OCI-LY7 (cell line): ENCODE measurements at regions of chr1 and their contacts with region 1.

Region 1: DNA sequence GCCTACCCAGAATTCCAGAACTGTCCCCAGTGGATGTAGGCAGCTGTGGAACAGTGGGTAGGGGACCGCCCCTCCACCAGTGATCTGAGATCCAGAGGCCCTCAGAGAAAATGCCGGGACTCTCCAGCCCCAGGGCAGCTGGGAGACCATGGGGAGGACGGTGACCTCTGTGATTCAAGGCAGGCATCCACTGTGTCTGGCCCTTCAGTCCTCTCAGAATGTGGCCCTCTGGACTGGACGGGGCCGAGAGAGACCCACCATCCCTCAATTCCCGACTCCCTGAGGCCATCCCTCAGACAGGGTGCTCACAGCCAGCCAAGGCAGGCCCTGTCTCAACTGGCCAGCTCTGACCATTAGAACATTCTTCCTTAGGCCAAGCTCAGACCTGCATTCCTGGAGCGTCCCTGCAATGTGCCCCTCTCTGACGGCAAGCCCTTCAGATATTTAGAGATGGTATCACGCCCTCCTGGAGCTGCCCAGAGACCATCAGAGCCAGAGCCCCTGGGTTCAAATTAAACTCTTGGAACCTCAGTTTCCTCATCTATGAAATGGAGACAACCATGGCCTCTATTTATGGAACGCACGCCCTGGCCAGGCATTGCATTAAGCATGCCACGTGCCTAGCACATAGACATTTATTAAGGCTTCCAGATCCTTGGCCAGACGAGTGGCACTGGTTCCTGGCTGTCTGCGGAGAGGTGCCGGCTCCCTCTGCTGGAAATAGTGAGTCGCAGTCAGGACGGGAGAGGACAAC is 9.6 kb upstream of the EPS8L3 start:
- DNase-seq: peak; percentile 80
- H3K4me3 ChIP-seq: no peak overlapping the region
- H3K27ac ChIP-seq: no peak overlapping the region
- H3K4me1 ChIP-seq: no peaks in the 10 kb centered on the region
- CTCF ChIP-seq: peak; percentile 83

Region 2: DNA sequence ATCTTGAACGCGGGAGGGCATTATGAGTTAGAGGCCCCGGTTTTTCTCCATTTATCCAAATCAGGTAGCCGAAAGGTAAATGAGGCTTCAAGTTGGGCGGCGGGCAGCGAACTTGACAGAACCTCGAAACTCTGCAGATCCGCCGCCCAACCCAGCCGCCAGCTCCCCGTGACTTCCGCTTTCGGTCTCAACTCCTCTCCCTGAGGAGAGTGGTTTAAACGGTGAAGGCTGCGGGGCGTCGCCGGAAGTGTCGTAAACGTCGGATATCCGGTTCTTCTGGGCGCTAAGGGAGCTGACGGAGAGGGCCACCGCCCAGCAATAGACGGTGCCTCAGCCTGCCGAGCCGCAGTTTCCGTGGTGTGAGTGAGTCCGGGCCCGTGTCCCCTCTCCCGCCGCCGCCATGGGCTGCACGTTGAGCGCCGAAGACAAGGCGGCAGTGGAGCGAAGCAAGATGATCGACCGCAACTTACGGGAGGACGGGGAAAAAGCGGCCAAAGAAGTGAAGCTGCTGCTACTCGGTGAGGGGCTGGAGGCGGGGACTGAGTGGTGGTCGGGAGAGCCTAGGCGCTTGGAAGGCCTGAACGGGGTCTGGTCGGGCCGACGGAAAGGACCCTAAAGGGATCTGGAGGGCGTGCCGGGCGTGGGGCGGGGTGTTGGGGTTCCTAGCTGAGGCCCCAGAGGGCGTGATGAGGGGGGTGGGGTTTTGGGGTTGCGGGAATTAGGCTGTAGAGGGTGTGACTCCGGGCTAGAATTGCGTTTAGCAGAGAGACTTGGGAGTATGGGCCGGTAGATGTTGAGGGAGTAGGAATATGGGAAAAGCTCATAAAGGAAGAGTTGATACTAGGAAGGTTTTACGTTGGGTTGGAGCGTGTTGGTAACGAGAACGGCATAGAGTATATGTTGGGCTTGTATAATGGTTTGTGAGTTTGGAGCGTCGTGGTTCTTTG is 224.7 kb before region 1 on chr1 and contains the start of gene GNAI3:
- CTCF ChIA-PET with region 1: no interaction called
- POLR2A ChIA-PET with region 1: no interaction called
- intact Hi-C with region 1: loop called (anchors 1 kb)
- DNase-seq: peak; percentile 97
- H3K4me3 ChIP-seq: peak within 1 kb of the TSS; percentile 85
- H3K27ac ChIP-seq: peak within 1 kb of the TSS; percentile 79
- H3K4me1 ChIP-seq: peaks cover 25% of the 10 kb centered on the region
- CTCF ChIP-seq: no peak; the same call in 1 of the 2 replicates
- total RNA-seq, gene GNAI3: 3.8 and 4.1 TPM in 2 replicates

Region 3: GRCh38 chr1:109643385-109644230 is 129.7 kb before region 1 on chr1:
- CTCF ChIA-PET with region 1: interaction called, 20 read pairs
- POLR2A ChIA-PET with region 1: no interaction called
- intact Hi-C with region 1: loop called (anchors 5 kb)
- DNase-seq: peak; percentile 85
- H3K4me3 ChIP-seq: no peak overlapping the region
- H3K27ac ChIP-seq: no peak overlapping the region
- H3K4me1 ChIP-seq: no peaks in the 10 kb centered on the region
- CTCF ChIP-seq: peak; percentile 89

Region 4: DNA sequence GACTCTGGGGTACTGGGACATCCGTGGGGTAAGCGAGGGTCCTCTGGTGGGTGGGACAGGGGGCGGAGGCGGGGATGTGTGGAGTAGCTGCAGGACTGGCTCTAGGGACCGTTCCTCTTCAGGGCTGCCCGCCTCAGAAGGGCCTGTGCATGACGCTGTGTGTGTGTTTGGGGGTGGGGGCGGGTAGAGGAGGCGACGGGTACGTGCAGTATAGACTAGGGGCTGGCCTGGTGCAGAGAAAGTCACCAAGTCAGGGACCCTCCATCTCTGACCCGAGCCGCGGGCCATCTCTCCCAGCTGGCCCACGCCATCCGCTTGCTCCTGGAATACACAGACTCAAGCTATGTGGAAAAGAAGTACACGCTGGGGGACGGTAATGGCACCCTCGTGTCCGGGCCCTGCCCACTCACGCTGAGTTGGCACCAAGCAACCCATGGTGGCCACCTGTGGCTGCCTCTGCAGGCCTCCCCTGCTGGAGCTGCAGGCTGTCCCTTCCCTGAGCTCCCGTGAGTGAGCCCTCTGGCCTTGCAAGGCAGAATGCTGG is 60.9 kb before region 1 on chr1:
- CTCF ChIA-PET with region 1: no interaction called
- POLR2A ChIA-PET with region 1: no interaction called
- intact Hi-C with region 1: no loop called
- DNase-seq: no peak
- H3K4me3 ChIP-seq: no peak overlapping the region
- H3K27ac ChIP-seq: no peak overlapping the region
- H3K4me1 ChIP-seq: no peaks in the 10 kb centered on the region
- CTCF ChIP-seq: no peak

Region 5: DNA sequence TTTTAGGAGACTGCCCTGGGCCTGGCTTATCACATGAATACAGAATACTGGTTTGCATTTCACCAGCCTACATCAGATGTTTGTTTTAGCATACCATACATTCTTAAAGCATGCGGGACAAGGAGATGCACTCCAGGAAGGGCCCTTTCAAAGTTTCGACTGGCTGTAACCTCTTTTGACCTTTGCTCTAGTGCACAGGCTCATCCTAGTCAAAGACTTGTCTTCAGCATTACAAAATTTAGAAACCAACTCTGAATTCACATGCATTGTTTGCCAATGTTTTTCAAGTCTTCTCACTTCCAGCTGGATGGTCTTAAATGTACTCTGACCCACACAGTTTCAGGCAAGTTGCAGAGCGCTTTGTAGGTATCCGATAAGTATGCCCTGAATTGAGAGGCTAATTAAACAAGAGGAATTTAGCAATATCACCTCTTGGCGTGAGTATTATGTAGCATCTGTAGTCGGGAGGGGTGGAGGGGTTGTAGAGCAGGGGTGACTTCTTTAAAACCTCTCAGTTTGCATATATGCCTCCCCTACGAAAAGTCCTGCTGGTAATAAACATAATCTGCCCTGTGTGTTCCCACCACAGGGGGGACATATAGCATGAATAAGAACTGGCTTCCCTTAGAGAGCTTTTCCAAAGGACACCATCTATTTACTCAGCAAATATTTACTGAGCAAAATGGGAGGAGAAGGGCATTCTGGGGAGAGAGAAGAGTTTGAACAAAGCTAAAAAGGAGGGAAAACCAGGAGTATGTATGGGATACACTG is 186.8 kb after region 1 on chr1:
- CTCF ChIA-PET with region 1: no interaction called
- POLR2A ChIA-PET with region 1: no interaction called
- intact Hi-C with region 1: no loop called
- DNase-seq: no peak
- H3K4me3 ChIP-seq: no peak overlapping the region
- H3K27ac ChIP-seq: no peak overlapping the region
- H3K4me1 ChIP-seq: no peaks in the 10 kb centered on the region
- CTCF ChIP-seq: no peak

Region 6: DNA sequence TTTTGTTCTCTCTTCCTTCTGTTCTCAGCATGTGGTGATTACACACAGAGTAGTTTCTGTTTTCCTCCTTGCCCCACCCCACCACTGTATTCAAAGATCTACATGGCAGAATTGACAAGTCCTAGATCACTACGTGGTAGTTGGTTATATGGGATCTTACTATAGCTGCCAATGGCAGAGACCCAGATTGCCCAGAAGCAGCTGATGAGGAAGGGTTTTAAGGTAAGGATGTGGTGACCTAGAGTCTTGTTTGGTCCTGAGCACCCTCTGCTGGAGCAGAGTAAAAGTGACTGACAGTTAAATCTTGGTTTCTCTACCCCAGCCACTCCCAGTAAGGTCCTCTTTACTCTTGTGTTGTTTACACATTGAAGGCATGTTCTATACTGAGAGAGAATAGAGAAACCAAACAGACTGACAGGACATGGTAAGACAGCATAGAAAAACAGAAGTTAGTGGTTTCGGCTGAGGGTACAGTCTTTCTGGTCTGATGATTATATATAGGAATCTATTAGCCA is 238.3 kb after region 1 on chr1:
- CTCF ChIA-PET with region 1: no interaction called
- POLR2A ChIA-PET with region 1: no interaction called
- intact Hi-C with region 1: loop called (anchors 1 kb)
- DNase-seq: peak; percentile 75
- H3K4me3 ChIP-seq: no peak overlapping the region
- H3K27ac ChIP-seq: peak overlapping the region; percentile 50
- H3K4me1 ChIP-seq: peaks cover 19% of the 10 kb centered on the region
- CTCF ChIP-seq: peak; percentile 83